ENCODE measurements at regions of chr19 and their contacts with region 1.

Region 1: GRCh38 chr19:29104605-29105200 is 108.2 kb downstream of the UQCRFS1 start:
- DNase-seq: no peak
- H3K4me3 Mint-ChIP-seq: no peak overlapping the region
- H3K27ac Mint-ChIP-seq: no peak overlapping the region
- H3K4me1 Mint-ChIP-seq: no peaks in the 10 kb centered on the region
- H3K27me3 Mint-ChIP-seq: peaks cover 2% of the 10 kb centered on the region

Region 2: DNA sequence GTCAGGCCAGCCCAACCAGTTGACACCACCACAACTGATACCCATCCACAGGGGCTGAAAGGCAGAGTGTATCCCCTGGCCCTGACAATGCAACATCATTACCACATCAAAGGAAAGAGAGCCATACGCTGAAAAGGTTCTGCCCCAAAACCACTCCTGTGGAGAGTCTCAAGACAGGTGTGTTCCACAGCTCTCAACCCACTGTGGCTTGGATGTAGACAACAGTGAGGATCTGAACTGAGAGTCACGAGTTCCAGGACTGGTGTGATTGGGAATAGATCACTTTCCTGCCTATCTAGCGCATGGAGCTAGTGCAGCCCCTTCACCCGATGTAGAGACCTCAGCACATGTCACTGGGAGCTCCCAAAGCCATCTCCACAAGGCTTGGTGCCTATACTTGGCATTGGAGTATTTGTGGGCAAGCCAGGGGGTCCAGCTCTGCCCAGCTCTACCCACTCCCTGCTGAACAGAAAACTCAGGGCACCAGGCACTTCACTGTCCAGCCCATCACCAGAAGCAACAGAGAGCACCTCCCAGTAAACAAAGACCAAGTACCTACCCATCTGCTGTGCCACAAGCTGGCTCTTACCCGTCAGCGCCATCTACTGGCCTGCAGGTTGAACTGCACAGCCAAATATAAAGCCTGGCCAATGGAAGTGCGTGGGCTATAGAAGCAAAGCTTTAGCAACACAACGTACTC is 471.2 kb before region 1 on chr19:
- CTCF ChIA-PET with region 1: no interaction called
- POLR2A ChIA-PET with region 1: no interaction called
- intact Hi-C with region 1: no loop called
- DNase-seq: peak; percentile 30
- H3K4me3 Mint-ChIP-seq: no peak overlapping the region
- H3K27ac Mint-ChIP-seq: no peak overlapping the region
- H3K4me1 Mint-ChIP-seq: no peaks in the 10 kb centered on the region
- H3K27me3 Mint-ChIP-seq: no peaks in the 10 kb centered on the region

Region 3: GRCh38 chr19:28898249-28898648 is 206.5 kb before region 1 on chr19:
- CTCF ChIA-PET with region 1: no interaction called
- POLR2A ChIA-PET with region 1: no interaction called
- intact Hi-C with region 1: no loop called
- DNase-seq: no peak
- H3K4me3 Mint-ChIP-seq: no peak overlapping the region
- H3K27ac Mint-ChIP-seq: no peak overlapping the region
- H3K4me1 Mint-ChIP-seq: no peaks in the 10 kb centered on the region
- H3K27me3 Mint-ChIP-seq: no peaks in the 10 kb centered on the region

Region 4: DNA sequence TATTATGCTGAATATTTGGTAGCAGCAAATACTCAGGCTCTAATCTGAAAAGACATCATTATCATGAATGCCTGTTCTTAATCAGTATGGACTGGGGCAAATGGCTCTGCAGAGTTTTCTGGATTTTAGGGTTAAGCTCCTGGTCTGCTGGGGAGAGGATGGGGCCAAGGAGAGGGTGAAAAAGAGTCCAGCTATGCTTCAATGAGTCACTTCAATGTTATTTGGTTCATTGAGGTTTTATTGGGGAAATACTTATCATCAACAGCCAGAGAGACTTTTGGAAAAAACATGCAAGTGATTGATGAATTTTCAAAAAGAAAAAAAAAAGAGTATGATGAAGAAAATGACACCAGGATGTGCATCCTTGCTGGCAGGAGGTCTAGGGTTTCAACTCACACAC is 170.1 kb before region 1 on chr19:
- CTCF ChIA-PET with region 1: no interaction called
- POLR2A ChIA-PET with region 1: no interaction called
- intact Hi-C with region 1: no loop called
- DNase-seq: no peak
- H3K4me3 Mint-ChIP-seq: no peak overlapping the region
- H3K27ac Mint-ChIP-seq: no peak overlapping the region
- H3K4me1 Mint-ChIP-seq: no peaks in the 10 kb centered on the region
- H3K27me3 Mint-ChIP-seq: no peaks in the 10 kb centered on the region

Region 5: GRCh38 chr19:28960986-28961705 is 143.6 kb before region 1 on chr19:
- CTCF ChIA-PET with region 1: no interaction called
- POLR2A ChIA-PET with region 1: no interaction called
- intact Hi-C with region 1: loop called (anchors 5 kb)
- DNase-seq: no peak
- H3K4me3 Mint-ChIP-seq: no peak overlapping the region
- H3K27ac Mint-ChIP-seq: no peak overlapping the region
- H3K4me1 Mint-ChIP-seq: no peaks in the 10 kb centered on the region
- H3K27me3 Mint-ChIP-seq: peaks cover 1% of the 10 kb centered on the region

Region 6: GRCh38 chr19:29154163-29154562 is 49.5 kb after region 1 on chr19:
- CTCF ChIA-PET with region 1: no interaction called
- POLR2A ChIA-PET with region 1: no interaction called
- intact Hi-C with region 1: no loop called
- DNase-seq: no peak
- H3K4me3 Mint-ChIP-seq: no peak overlapping the region
- H3K27ac Mint-ChIP-seq: no peak overlapping the region
- H3K4me1 Mint-ChIP-seq: no peaks in the 10 kb centered on the region
- H3K27me3 Mint-ChIP-seq: no peaks in the 10 kb centered on the region

Measured in activated CD4-positive, alpha-beta memory T cell treated with anti-CD3 and anti-CD28 coated beads for 36 hours (primary cell).